Activated CD4-positive, alpha-beta T cell treated with anti-CD3 and anti-CD28 coated beads for 36 hours (primary cell): ENCODE measurements at regions of chr1 and their contacts with region 1.

Region 1: GRCh38 chr1:28581536-28582247 is 10.4 kb upstream of the RAB42 start:
- DNase-seq: peak; percentile 97
- ATAC-seq: peak; percentile 91
- H3K4me3 Mint-ChIP-seq: peak overlapping the region; percentile 89
- H3K27ac Mint-ChIP-seq: peak overlapping the region; percentile 95
- H3K4me1 Mint-ChIP-seq: peaks cover 33% of the 10 kb centered on the region
- H3K27me3 Mint-ChIP-seq: no peaks in the 10 kb centered on the region

Region 2: DNA sequence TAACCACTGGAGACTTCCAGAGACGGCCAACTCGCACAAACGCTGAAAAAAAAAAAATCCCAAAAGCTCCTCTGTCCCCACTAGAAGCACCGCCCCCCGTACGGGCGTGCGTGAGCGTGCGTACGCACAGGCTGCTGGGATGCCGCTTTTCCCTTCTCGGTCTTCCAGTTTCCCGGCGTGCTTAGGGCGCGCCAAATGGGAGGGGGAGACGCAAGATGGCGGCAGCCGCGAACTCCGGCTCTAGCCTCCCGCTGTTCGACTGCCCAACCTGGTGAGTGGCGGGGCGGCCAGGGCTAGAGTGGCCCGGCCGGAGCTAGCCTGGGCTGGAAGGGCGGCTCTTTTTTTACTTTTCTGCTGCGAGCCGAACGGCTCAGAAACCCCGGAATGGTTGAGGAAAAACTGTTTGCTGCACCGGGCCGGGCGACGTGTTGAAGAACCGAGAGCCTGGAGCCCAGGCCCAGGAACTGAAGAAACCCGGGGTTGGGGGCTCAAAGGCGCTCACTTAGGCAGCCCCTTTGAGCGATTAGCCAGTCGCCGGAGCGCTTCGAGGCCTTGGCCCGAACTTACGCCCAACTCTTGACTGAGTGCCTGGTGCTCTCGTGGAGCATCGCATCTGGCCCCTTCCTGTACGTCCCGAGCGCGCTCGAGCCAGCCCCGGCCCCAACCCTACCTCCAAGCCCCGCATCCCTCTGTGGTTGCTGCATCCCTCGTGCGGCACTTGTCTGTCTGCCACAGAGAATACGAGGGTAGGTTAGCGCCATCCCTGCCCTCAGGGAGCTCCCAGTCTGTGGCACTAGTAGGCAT is 750.9 kb before region 1 on chr1 and contains the start of gene PPP1R8:
- CTCF ChIA-PET with region 1: no interaction called
- POLR2A ChIA-PET with region 1: no interaction called
- intact Hi-C with region 1: loop called in 1 of 2 experiments (anchors 2 kb)
- DNase-seq: peak; percentile 94
- ATAC-seq: peak; percentile 99
- H3K4me3 Mint-ChIP-seq: peak within 1 kb of the TSS; percentile 94
- H3K27ac Mint-ChIP-seq: peak within 1 kb of the TSS; percentile 94
- H3K4me1 Mint-ChIP-seq: peaks cover 40% of the 10 kb centered on the region
- H3K27me3 Mint-ChIP-seq: no peaks in the 10 kb centered on the region
- total RNA-seq, gene PPP1R8: 49.6 to 65.9 TPM

Region 3: DNA sequence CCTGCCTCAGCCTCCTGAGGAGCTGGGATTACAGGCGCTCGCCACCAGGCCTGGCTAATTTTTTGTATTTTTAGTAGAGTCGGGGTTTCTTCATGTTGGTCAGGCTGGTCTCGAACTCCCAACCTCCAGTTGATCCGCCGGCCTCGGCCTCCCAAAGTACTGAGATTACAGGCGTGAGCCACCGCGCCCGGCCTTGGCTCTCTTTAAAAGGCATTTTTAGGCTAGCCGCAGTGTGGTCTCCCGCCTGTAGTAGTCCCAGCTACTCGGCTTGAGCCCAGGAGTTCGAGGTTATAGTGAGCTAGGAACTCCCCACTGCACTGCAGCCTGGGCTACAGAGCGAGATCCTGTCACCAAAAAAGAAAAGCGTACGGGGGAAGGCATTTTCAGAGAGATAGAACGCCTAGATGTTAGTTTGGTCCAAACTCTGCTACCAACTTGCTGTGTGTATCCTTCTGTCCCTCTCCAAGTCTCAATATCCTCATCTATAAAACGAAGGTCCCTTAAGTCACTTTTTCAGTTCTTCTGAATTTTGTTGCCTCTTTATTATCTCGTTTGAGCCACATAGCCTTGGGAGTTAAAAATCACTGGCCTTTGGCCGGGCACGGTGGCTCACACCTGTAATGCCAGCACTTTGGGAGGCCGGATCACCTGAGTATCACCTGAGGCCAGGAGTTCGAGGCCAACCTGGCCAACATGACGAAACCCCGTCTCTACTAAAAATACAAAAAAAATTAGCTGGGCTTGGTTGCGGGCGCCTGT is 252.1 kb before region 1 on chr1:
- CTCF ChIA-PET with region 1: no interaction called
- POLR2A ChIA-PET with region 1: interaction called, 10 read pairs
- intact Hi-C with region 1: loop called in 1 of 2 experiments (anchors 1 kb)
- DNase-seq: peak; percentile 61
- ATAC-seq: peak; percentile 19
- H3K4me3 Mint-ChIP-seq: peak overlapping the region; percentile 96
- H3K27ac Mint-ChIP-seq: peak overlapping the region; percentile 97
- H3K4me1 Mint-ChIP-seq: peaks cover 39% of the 10 kb centered on the region
- H3K27me3 Mint-ChIP-seq: no peaks in the 10 kb centered on the region

Region 4: GRCh38 chr1:28510665-28511440 is 70.8 kb before region 1 on chr1:
- CTCF ChIA-PET with region 1: interaction called, 3 read pairs
- POLR2A ChIA-PET with region 1: interaction called, 86 read pairs
- intact Hi-C with region 1: loop called in 1 of 2 experiments (anchors 2 kb)
- DNase-seq: peak; percentile 34
- ATAC-seq: peak; percentile 16
- H3K4me3 Mint-ChIP-seq: peak overlapping the region; percentile 98
- H3K27ac Mint-ChIP-seq: peak overlapping the region; percentile 99
- H3K4me1 Mint-ChIP-seq: peaks cover 33% of the 10 kb centered on the region
- H3K27me3 Mint-ChIP-seq: peaks cover 1% of the 10 kb centered on the region

Region 5: GRCh38 chr1:28642847-28643635 is 61.3 kb after region 1 on chr1 and contains the start of gene TAF12:
- CTCF ChIA-PET with region 1: interaction called, 4 read pairs
- POLR2A ChIA-PET with region 1: interaction called, 84 read pairs
- intact Hi-C with region 1: loop called (anchors 1 kb)
- DNase-seq: peak; percentile 95
- ATAC-seq: peak; percentile 81
- H3K4me3 Mint-ChIP-seq: peak within 1 kb of the TSS; percentile 98
- H3K27ac Mint-ChIP-seq: peak within 1 kb of the TSS; percentile 97
- H3K4me1 Mint-ChIP-seq: peaks cover 50% of the 10 kb centered on the region
- H3K27me3 Mint-ChIP-seq: no peaks in the 10 kb centered on the region
- total RNA-seq, gene TAF12: 23.8 to 32.5 TPM

Region 6: DNA sequence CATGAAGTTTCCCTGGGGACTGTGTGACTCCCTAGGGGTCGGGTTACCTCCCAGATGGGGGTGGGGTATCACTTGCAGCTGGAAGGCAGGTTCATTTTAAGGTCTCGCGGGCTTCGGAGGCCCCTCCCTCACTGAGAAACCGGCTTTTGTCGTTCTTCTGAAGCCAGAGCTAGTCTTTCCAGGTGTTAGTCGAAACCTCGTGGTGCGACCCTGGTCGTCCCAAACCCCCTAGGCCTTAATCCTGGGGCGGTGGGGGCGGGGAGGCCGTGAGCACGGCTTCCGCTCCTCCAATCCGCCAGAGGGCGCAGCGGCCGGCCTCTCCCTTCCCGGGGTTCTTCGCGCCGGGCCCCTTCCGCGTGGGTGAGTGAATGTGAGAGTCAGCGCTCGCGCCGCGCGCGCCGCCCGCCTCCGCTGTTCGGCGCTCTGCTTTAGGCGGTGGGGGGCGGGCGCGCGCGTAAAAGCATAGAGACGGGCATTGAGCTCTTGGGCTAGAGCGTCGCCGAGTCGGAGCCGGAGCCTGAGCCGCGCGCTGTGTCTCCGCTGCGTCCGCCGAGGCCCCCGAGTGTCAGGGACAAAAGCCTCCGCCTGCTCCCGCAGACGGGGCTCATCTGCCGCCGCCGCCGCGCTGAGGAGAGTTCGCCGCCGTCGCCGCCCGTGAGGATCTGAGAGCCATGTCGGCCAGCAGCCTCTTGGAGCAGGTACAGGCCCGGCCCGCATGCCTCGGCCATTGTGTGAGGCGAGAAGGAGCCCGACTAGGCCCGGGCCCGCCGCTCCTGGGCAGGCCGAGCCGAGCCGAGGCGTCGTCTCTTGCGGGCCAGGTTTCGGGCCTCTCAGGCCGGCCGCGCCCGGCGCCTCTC is 155.0 kb after region 1 on chr1 and contains the start of gene YTHDF2:
- CTCF ChIA-PET with region 1: interaction called, 4 read pairs
- POLR2A ChIA-PET with region 1: interaction called, 13 read pairs
- intact Hi-C with region 1: loop called (anchors 1 to 5 kb)
- DNase-seq: peak; percentile 99
- ATAC-seq: peak; percentile 90
- H3K4me3 Mint-ChIP-seq: peak within 1 kb of the TSS; percentile 95
- H3K27ac Mint-ChIP-seq: peak within 1 kb of the TSS; percentile 90
- H3K4me1 Mint-ChIP-seq: peaks cover 31% of the 10 kb centered on the region
- H3K27me3 Mint-ChIP-seq: no peaks in the 10 kb centered on the region
- total RNA-seq, gene YTHDF2: 74.8 to 98.7 TPM